Activated T-helper 1 cell treated with anti-CD3 and anti-CD28 coated beads, Interleukin-12 subunit alpha, Interleukin-12 subunit beta, Interleukin-2, Interleukin-4 antibody, amounts not matched to agents 30 ng/mL and 10 ng/mL and 1 ng/mL, durations not matched to agents 14 hours and 24 hours and 36 hours (primary cell): ENCODE measurements at regions of chr9 and their contacts with region 1.

Region 1: GRCh38 chr9:132341177-132341840 is 13.5 kb downstream of the SETX start:
- DNase-seq: no peak
- H3K4me3 Mint-ChIP-seq: no peak overlapping the region
- H3K27ac Mint-ChIP-seq: no peak overlapping the region
- H3K4me1 Mint-ChIP-seq: peaks cover 14% of the 10 kb centered on the region
- H3K27me3 Mint-ChIP-seq: no peaks in the 10 kb centered on the region

Region 2: DNA sequence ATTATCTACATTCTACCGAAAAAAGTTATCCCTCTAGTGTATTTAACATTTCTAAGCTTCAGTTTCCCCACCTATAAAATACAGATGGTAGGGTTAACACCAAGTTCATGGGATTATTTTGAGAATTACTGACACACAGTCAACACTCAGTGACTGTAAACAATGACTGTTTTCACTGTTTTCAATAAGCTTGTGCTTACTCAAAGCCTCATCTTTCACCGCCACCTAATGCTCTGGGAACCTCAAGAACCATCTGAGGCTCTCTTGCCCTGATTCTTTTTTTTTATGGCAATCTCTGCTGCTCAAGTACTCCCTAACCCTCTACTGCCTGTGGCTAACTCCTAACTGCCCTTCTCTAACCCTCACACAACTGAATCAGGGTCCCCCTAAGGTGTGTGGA is 46.1 kb before region 1 on chr9:
- intact Hi-C with region 1: loop called (anchors 5 kb)
- DNase-seq: no peak
- H3K4me3 Mint-ChIP-seq: no peak overlapping the region
- H3K27ac Mint-ChIP-seq: peak overlapping the region; percentile 47
- H3K4me1 Mint-ChIP-seq: peaks cover 35% of the 10 kb centered on the region
- H3K27me3 Mint-ChIP-seq: no peaks in the 10 kb centered on the region